CD4-positive, alpha-beta memory T cell (primary cell): ENCODE measurements at regions of chr2 and their contacts with region 1.

Region 1: DNA sequence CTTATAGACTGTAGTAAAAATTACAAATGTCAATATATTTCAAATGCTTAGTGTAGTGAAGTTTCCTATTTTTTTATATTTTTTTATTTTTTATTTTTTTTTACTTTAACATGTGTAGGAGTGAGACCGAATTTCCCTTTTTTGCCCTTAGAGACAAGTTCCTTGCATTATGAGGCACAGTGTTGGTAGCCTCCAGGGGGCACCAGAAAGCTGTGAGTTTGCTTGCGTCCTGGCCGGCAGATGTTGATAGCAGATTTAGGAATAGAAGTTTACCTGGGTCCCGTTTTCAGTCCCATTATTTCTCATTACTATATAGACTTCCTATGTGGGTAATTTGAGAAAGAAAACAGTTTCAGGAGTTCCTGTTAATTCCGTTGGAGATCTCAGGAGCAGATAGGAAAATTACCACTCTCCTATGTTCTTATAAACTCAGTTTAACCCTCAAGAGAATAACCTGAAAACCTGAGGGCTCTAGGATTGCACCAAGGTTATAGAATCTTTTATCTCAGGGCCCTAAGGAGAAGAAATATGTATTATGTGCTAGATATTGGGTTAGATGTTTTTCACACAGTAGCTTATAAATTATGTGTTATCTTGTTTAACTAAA is 157.5 kb upstream of the SESTD1 start:
- DNase-seq: peak in 3 of 5 donors; percentile 4 to 12 (median 4)
- H3K4me3 ChIP-seq: no peak overlapping the region
- H3K4me3 Mint-ChIP-seq: no peak overlapping the region
- H3K27ac ChIP-seq: no peak overlapping the region
- H3K27ac Mint-ChIP-seq: no peak overlapping the region
- H3K4me1 ChIP-seq: no peaks in the 10 kb centered on the region
- H3K4me1 Mint-ChIP-seq: peaks cover 0 to 2% (median 0%) of the 10 kb centered on the region in 4 donors
- H3K27me3 ChIP-seq: no peaks in the 10 kb centered on the region
- H3K27me3 Mint-ChIP-seq: peaks cover 0 to 7% of the 10 kb centered on the region in 2 donors

Region 2: GRCh38 chr2:179410552-179411356 is 11.4 kb before region 1 on chr2:
- CTCF ChIA-PET with region 1: interaction called, 10 read pairs
- POLR2A ChIA-PET with region 1: no interaction called
- intact Hi-C with region 1: no loop called
- DNase-seq: peak in 1 of 5 donors; percentile 4
- H3K4me3 ChIP-seq: no peak overlapping the region
- H3K4me3 Mint-ChIP-seq: no peak overlapping the region
- H3K27ac ChIP-seq: no peak overlapping the region
- H3K27ac Mint-ChIP-seq: no peak overlapping the region
- H3K4me1 ChIP-seq: no peaks in the 10 kb centered on the region
- H3K4me1 Mint-ChIP-seq: peaks cover 0 to 4% (median 0%) of the 10 kb centered on the region in 4 donors
- H3K27me3 ChIP-seq: no peaks in the 10 kb centered on the region
- H3K27me3 Mint-ChIP-seq: peaks cover 4 to 6% of the 10 kb centered on the region in 2 donors